ENCODE measurements at regions of chr4 and their contacts with region 1.

Region 1: DNA sequence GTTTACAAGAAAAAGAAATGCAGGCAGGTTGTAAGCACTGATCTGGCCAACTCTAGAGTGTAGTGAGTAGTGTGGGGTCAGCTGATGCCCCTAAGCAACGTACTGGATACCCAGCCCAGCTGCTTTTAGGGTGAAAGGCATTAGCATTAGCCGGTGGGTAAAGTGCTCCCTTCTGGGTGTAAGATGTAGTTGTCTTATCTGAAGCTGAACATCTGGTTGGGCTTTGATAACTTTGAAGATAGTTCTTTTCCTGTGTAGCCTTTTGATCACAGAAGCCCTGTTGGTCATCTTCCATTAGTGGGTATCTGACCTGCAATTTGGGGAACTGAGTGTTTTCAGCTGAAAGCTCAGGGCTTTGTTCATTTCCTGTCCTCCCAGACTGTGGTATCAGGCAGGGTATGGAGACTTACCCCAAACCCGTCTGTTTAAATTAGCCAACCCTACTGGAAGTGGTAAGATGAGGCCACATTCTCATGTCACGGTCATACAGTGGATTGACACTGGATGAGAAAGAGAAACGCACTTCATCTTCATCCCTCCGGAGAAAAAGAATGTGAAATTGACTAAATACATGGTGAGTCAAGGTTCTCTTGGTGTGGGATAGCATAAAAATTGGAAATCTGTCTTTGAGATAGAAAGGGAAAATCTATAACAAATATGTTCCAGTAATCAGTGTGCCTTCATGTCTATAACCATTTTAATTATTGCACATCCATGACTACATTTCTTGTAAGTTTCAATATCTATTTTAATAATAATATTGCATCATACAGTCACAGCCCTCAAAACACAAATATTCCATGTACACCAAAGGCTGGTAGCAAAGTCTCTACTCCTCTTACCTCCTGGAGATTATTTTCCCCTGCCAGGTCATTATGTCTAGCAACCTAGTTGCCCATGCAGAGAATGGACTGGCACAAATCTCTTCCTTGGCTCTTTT is 8.7 kb downstream of the RHOH start:
- DNase-seq: peak; percentile 68
- H3K4me3 Mint-ChIP-seq: peak overlapping the region; percentile 85
- H3K27ac Mint-ChIP-seq: peak overlapping the region; percentile 98
- H3K4me1 Mint-ChIP-seq: peaks cover 51% of the 10 kb centered on the region
- H3K27me3 Mint-ChIP-seq: no peaks in the 10 kb centered on the region

Region 2: DNA sequence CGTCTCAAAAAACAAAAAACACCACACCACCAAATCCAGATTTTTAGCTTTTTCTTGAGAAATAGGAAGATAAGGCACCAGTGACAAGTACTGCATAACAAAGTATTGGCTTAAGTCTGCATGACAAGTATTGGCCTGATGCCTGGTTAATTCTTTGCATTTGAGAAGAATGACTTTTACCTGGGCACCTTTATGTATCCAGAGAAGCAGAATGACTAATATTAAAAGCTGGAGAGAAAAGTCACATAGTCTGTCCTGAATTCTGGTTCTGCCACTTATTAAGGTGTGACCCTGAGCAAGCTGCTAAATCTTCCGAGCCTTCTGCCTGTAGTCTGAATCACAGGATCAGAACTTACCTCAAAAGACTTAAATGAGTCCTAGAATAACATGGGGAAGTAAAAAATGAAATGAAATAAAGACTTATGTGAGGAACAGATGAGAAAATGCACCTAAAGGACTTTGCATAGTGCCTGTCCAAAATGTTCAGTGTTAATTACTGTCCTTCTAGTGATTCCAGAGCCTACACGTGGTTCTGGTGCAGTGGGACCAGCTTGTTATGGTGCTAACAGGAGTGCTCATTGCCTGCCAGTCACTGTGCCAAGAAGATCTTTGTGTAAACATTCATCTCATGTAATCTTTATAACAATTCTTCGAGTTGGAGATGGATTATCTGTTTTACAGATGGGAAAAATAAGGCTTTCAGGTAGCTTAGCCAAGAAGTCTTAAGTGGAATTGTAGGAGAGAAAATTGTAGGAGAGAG is 709.9 kb before region 1 on chr4:
- CTCF ChIA-PET with region 1: no interaction called
- intact Hi-C with region 1: no loop called
- DNase-seq: no peak
- H3K4me3 Mint-ChIP-seq: no peak overlapping the region
- H3K27ac Mint-ChIP-seq: no peak overlapping the region
- H3K4me1 Mint-ChIP-seq: no peaks in the 10 kb centered on the region
- H3K27me3 Mint-ChIP-seq: no peaks in the 10 kb centered on the region

Region 3: DNA sequence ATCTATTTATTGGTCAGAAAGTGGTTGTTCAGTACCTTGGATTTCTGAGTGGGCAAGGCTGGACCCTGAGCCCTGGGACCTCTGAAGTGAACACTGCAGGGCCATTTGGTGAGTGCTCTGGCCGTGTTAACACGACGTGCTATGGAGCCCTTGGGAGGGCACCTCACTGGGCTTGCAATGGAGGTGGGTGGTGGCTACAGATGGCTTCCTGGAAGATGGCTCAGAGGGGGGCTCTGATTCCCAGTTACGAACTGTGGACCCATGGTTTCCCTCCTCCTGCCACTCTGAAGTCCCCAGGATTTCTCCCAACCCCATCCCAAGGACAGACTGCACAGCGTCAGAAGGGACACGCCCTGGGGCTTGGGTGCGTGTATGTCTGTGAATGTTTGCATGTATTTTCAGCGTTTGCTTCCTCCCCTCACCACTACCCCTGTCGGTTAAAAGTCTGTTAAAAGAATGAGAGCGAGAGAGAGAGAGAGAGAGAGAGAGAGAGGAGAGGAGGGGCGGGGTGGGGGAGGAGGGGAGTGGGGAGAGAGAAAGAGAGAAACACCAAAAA is 12.4 kb before region 1 on chr4:
- CTCF ChIA-PET with region 1: interaction called, 9 read pairs
- intact Hi-C with region 1: loop called (anchors 1 kb)
- DNase-seq: peak; percentile 52
- H3K4me3 Mint-ChIP-seq: peak overlapping the region; percentile 85
- H3K27ac Mint-ChIP-seq: peak overlapping the region; percentile 98
- H3K4me1 Mint-ChIP-seq: peaks cover 67% of the 10 kb centered on the region
- H3K27me3 Mint-ChIP-seq: no peaks in the 10 kb centered on the region